CD4-positive, alpha-beta memory T cell (primary cell): ENCODE measurements at regions of chr12 and their contacts with region 1.

Region 1: DNA sequence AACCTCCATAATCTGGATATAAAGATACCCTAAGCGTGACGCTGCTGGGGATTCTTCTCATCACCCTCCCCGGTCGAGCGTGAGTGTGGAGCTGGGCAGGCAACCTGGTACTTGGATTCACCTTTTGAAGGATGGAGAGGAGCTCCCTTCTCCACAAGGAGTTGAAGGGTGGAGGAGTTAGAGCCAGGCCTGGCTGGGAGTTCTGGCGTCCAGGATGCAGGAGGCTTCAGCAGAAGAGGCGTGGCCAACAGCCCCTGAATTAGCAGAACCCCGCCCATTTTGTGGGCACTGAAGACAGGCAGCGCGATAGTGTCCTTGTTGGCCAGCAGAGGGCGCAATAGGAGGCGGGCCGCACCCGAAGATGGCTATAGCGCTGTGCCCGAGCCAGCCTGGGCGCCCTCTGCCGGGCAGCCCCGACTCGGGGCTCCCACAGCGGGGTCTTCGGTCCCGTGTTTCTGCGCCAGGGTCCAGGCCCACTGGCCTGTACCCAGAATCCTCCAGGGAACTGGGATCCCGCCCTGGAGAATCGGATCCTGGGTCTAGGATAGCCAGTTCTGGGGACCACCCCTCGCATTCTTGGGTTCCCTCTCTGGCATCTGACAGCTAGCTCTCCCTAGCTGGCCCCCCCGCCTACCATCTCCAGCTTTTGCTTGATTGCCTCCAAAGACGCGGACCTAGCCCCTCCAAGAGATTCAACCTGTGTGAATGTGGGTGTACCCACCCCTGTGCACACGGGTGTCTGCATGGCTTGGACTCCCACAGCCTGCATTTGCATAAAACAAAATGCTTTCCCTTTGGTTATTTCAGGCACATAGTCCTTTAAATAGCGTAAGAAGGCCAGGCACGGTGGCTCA is 26.0 kb upstream of the SMUG1 start:
- DNase-seq: peak; percentile 88 to 90 (median 88)
- H3K4me3 ChIP-seq: peak overlapping the region in 1 of 2 donors; percentile 70
- H3K4me3 Mint-ChIP-seq: peak overlapping the region; percentile 63 to 85 (median 83)
- H3K27ac ChIP-seq: no peak overlapping the region
- H3K27ac Mint-ChIP-seq: peak overlapping the region in 3 of 7 donors; percentile 12 to 90 (median 64)
- H3K4me1 ChIP-seq: peaks cover 37% of the 10 kb centered on the region
- H3K4me1 Mint-ChIP-seq: peaks cover 17 to 48% (median 27%) of the 10 kb centered on the region in 4 donors
- H3K27me3 ChIP-seq: no peaks in the 10 kb centered on the region
- H3K27me3 Mint-ChIP-seq: peaks cover 2 to 3% of the 10 kb centered on the region in 2 donors

Region 2: DNA sequence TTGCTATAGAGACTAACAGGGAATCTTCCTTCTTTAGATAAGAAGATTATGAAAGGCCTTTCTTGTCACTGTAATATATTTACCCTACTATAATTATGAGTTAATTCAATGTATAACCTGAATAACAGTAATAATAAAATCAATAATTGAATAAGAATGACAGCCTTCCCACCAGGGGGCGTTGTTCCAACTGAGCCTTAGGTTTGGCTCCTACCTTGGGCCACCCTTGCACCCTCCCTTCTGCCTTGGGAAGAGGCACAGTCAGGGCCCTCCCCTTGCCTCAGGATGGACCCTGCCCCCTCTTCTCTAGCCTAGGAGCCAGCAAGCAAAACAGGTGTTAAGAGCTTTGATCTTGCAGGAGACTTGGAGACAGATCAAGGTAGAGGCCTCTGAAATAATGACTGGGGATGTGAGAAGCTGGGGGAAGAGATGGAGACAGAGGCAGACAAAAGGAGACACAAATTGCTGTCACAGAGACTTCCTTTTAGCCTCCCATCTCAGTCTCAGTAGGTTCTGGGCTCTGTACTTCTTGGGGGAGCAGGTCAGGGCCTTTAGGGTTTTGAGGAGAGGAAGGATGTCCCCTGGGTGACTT is 422.9 kb before region 1 on chr12:
- CTCF ChIA-PET with region 1: interaction called, 4 read pairs
- POLR2A ChIA-PET with region 1: no interaction called
- intact Hi-C with region 1: loop called (anchors 1 kb)
- DNase-seq: peak in 3 of 5 donors; percentile 13 to 17 (median 16)
- H3K4me3 ChIP-seq: no peak overlapping the region
- H3K4me3 Mint-ChIP-seq: no peak overlapping the region
- H3K27ac ChIP-seq: no peak overlapping the region
- H3K27ac Mint-ChIP-seq: no peak overlapping the region
- H3K4me1 ChIP-seq: no peaks in the 10 kb centered on the region
- H3K4me1 Mint-ChIP-seq: no peaks in the 10 kb centered on the region
- H3K27me3 ChIP-seq: peaks cover 4% of the 10 kb centered on the region
- H3K27me3 Mint-ChIP-seq: peaks cover 10 to 11% of the 10 kb centered on the region in 2 donors

Region 3: DNA sequence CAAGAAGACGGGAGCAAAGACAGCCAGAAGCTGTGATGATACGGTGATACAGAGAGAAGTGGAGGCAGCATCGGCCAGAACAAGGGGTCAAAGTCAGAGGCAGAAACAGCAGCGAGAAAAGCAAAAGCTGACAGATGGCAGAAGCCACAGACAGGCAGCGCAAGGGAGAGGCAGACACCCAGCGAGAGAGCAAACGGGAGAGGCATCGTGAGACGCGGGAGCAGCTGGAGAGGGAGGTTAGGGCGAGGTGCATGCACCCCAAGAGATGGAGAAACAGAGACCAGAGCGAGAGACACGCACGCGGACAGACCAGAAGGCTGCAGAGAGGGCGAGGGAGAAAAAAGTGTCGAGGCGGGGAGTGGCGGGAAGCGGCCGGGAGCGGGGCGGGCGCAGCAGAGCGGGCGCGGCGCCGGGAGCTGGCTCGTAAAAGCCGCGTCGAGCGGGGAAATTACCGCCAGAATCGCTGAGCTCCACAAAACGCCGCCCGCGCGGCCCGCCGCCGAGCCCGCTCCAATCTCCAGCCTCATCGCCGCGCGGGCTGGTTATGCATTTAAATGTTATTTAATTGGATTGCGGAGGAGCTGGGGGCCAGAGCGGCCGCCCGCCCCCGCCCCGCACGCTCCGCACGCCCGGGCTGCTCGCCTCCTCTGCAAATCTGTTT is 41.6 kb before region 1 on chr12:
- CTCF ChIA-PET with region 1: no interaction called
- POLR2A ChIA-PET with region 1: no interaction called
- intact Hi-C with region 1: no loop called
- DNase-seq: peak in 4 of 5 donors; percentile 12 to 26 (median 19)
- H3K4me3 ChIP-seq: peak overlapping the region in 1 of 2 donors; percentile 34
- H3K4me3 Mint-ChIP-seq: no peak overlapping the region
- H3K27ac ChIP-seq: no peak overlapping the region
- H3K27ac Mint-ChIP-seq: no peak overlapping the region
- H3K4me1 ChIP-seq: peaks cover 14% of the 10 kb centered on the region
- H3K4me1 Mint-ChIP-seq: peaks cover 0 to 7% (median 4%) of the 10 kb centered on the region in 4 donors
- H3K27me3 ChIP-seq: peaks cover 41% of the 10 kb centered on the region
- H3K27me3 Mint-ChIP-seq: peaks cover 4% of the 10 kb centered on the region in 2 donors

Region 4: DNA sequence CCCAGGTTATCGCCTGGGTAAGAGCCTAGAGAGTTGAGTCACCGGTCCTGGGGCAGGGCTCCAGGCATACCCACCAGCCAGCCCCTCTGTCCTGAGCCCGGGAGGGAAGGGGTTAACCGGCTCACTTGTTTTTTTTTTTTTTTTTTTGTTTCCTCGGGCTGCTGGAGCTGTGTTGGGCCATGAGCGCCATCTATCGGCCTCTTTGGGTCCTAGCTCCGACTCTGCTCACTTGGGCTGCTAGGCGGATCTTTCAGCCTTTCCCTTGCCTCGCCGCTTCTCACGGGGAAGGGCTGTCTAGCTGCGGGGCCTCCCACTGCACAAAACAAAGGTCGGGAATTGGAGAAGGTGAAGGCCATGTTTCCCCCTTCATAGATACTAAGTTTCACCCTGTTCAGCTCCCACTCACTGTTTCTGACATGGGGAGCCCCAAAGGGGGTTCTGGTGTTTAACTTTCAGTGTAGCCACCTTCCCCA is 23.2 kb before region 1 on chr12:
- CTCF ChIA-PET with region 1: interaction called, 78 read pairs
- POLR2A ChIA-PET with region 1: interaction called, 4 read pairs
- intact Hi-C with region 1: no loop called
- DNase-seq: peak; percentile 79 to 81 (median 79)
- H3K4me3 ChIP-seq: no peak overlapping the region
- H3K4me3 Mint-ChIP-seq: peak overlapping the region in 4 of 8 donors; percentile 11 to 66 (median 32)
- H3K27ac ChIP-seq: no peak overlapping the region
- H3K27ac Mint-ChIP-seq: peak overlapping the region in 2 of 7 donors; percentile 67 to 68
- H3K4me1 ChIP-seq: peaks cover 22% of the 10 kb centered on the region
- H3K4me1 Mint-ChIP-seq: peaks cover 17 to 60% (median 25%) of the 10 kb centered on the region in 4 donors
- H3K27me3 ChIP-seq: peaks cover 23% of the 10 kb centered on the region
- H3K27me3 Mint-ChIP-seq: peaks cover 20 to 32% of the 10 kb centered on the region in 2 donors

Region 5: DNA sequence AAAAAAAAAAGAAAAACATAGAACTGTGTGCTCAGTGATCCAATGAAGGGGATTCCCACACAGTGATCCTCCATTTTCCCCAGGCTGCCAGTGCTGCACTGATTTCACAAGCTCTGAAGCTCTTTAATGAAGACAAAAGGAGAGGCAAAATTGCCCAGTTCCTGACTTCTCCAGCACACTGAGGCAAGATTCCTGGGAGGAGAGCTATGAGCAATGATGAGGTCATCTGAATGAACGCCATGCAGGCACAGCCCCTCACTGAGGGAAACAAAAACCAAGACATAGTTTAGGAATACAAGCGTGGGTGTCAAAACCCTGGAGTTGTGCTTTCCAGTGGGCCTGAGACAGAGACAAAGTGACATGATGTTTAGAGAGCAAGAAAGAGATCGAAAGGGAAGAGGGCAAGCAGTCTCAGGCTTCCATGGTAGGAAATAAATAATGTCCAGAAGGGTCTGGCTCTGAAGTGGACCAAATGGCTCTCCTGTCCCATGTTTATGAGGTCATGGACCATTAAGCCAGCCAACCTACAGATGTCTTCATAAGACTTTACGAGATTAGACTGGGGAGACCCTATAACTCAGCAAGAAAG is 14.9 kb after region 1 on chr12:
- CTCF ChIA-PET with region 1: interaction called, 21 read pairs
- POLR2A ChIA-PET with region 1: no interaction called
- intact Hi-C with region 1: no loop called
- DNase-seq: no peak
- H3K4me3 ChIP-seq: no peak overlapping the region
- H3K4me3 Mint-ChIP-seq: no peak overlapping the region
- H3K27ac ChIP-seq: no peak overlapping the region
- H3K27ac Mint-ChIP-seq: no peak overlapping the region
- H3K4me1 ChIP-seq: no peaks in the 10 kb centered on the region
- H3K4me1 Mint-ChIP-seq: peaks cover 0 to 3% (median 1%) of the 10 kb centered on the region in 4 donors
- H3K27me3 ChIP-seq: no peaks in the 10 kb centered on the region
- H3K27me3 Mint-ChIP-seq: no peaks in the 10 kb centered on the region

Region 6: GRCh38 chr12:54368709-54369583 is 154.2 kb after region 1 on chr12:
- CTCF ChIA-PET with region 1: interaction called, 6 read pairs
- POLR2A ChIA-PET with region 1: interaction called, 4 read pairs
- intact Hi-C with region 1: loop called (anchors 1 kb)
- DNase-seq: peak; percentile 81 to 88 (median 84)
- H3K4me3 ChIP-seq: peak overlapping the region in 1 of 2 donors; percentile 27
- H3K4me3 Mint-ChIP-seq: peak overlapping the region; percentile 63 to 90 (median 76)
- H3K27ac ChIP-seq: peak overlapping the region; percentile 37
- H3K27ac Mint-ChIP-seq: peak overlapping the region; percentile 30 to 86 (median 79)
- H3K4me1 ChIP-seq: peaks cover 33% of the 10 kb centered on the region
- H3K4me1 Mint-ChIP-seq: peaks cover 20 to 50% (median 31%) of the 10 kb centered on the region in 4 donors
- H3K27me3 ChIP-seq: no peaks in the 10 kb centered on the region
- H3K27me3 Mint-ChIP-seq: peaks cover 0 to 3% of the 10 kb centered on the region in 2 donors

Region 7: DNA sequence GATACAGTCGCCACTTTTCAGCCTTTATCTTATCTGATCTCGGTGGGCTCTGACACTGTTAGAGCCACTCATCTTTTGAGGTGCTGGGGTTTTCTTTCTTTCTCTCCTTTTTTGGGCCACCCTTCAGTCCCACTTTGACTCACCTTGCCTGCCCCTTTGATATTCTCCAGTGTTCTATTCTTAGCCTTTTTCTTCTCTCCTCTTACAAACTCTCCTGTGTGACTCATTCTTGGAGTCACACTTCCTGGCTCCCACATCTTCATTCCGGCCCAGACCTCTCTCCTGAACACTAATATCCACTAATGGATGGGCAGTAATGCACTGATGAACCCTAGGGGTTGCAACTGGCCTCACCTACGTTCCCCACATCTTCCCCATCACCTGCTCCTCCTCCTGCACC is 435.6 kb after region 1 on chr12:
- CTCF ChIA-PET with region 1: no interaction called
- POLR2A ChIA-PET with region 1: no interaction called
- intact Hi-C with region 1: no loop called
- DNase-seq: no peak
- H3K4me3 ChIP-seq: no peak overlapping the region
- H3K4me3 Mint-ChIP-seq: no peak overlapping the region
- H3K27ac ChIP-seq: no peak overlapping the region
- H3K27ac Mint-ChIP-seq: no peak overlapping the region
- H3K4me1 ChIP-seq: no peaks in the 10 kb centered on the region
- H3K4me1 Mint-ChIP-seq: no peaks in the 10 kb centered on the region
- H3K27me3 ChIP-seq: no peaks in the 10 kb centered on the region
- H3K27me3 Mint-ChIP-seq: peaks cover 28 to 40% of the 10 kb centered on the region in 2 donors